ENCODE measurements at regions of chr6 and their contacts with region 1.

Region 1: GRCh38 chr6:35736253-35736894 is 458 bp upstream of the ARMC12 start:
- DNase-seq: no peak
- H3K4me3 ChIP-seq: no peak overlapping the region
- H3K27ac ChIP-seq: peak overlapping the region in 2 of 4 donors; percentile 100
- H3K4me1 ChIP-seq: peaks cover 43 to 64% (median 48%) of the 10 kb centered on the region in 3 donors
- H3K27me3 ChIP-seq: no peaks in the 10 kb centered on the region
- CTCF ChIP-seq: peak; percentile 82 to 95 (median 90)
- POLR2A ChIP-seq: no peak

Region 2: DNA sequence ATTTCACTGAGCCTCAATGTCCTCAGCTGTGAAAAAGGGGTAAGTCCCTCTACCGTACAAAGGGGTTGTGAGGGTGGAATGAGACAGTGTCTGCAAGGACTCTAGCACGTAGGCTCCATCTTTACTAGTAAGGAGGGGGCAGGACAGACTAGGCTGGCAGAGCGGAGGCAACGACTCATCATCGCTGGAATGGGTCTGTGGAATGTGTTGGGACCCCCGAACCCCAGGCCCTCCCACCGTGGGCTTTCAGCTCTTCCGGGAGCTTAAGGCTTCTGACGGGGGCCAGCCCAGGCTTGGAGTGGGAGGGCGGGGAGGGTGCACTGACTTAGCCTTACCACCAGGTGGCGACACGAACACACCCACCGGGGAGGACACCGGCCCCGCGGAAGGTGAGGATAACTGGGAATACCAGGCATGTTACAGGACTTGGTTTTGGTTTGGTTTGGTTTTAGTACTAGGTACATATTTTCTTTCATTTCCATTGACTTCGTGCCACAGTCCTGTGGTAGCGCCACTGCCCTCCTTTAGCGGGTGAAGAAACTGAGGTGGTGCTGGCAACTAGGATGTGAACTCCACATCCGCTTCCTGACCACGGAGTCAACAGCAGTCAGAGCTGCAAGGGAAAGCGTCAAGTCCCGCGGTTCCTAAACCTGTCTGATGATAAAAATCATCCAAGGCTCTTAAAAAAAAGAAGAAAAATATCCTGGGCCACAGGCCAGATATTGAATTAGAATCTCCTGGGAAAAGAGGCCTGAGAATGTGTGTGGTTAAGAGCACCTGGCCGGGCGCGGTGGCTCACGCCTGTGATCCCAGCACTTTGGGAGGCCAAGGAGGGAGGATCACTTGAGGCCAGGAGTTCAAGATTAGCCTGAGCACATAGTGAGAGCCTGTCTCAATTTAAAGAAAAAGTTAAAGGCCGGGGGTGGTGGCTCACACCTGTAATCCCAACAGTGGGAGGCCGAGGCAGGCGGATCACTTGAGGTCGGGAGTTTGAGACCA is 213.4 kb before region 1 on chr6:
- intact Hi-C with region 1: loop called (anchors 5 kb)
- DNase-seq: no peak
- H3K4me3 ChIP-seq: peak overlapping the region in 2 of 4 donors; percentile 13 to 38
- H3K27ac ChIP-seq: no peak overlapping the region
- H3K4me1 ChIP-seq: peaks cover 0 to 22% (median 4%) of the 10 kb centered on the region in 3 donors
- H3K27me3 ChIP-seq: peaks cover 0 to 14% (median 0%) of the 10 kb centered on the region in 4 donors
- CTCF ChIP-seq: peak; percentile 96 to 100 (median 98)
- POLR2A ChIP-seq: no peak

Region 3: DNA sequence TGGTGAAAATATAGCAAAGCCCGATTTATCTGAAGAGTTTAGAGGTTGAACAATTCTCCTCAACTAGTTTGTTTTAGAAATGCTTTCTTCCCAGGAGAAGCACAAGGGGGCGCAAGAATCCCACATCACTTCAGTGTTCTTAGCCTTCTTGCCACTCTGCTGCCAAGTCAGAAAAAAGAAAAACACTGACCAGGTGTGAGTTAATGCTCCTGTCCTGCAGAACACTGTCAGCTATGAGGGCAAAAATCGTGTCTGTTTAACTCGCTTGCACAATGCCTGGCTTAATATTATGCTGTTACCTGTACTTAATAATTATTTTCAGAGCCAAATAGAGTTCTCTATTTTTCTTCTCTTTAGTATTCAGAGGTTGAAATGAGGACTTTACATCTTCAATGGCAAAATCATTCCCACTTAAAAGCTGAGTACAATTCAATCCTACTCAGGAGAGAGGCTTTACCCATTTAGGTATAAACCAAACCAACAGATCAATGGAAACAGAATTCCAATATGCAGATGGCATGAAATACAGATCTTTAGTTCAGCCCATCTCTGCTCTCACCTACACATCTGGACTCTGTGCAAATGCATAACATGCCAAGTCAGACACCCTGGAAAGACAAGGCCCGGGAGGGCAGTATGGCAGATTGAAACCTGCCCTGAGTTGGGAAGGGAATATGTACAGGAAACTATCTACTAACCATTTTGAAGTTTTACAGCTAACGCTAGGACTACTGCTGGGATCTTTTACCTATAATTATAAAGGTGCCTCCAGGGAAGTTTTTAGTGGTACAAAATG is 152.3 kb before region 1 on chr6:
- intact Hi-C with region 1: loop called (anchors 5 kb)
- DNase-seq: no peak
- H3K4me3 ChIP-seq: no peak overlapping the region
- H3K27ac ChIP-seq: peak overlapping the region; percentile 41 to 89 (median 74)
- H3K4me1 ChIP-seq: peaks cover 10 to 67% (median 49%) of the 10 kb centered on the region in 3 donors
- H3K27me3 ChIP-seq: no peaks in the 10 kb centered on the region
- CTCF ChIP-seq: peak; percentile 41 to 87 (median 83)
- POLR2A ChIP-seq: no peak